HEK293 (cell line): ENCODE measurements at regions of chr16 and their contacts with region 1.

Region 1: DNA sequence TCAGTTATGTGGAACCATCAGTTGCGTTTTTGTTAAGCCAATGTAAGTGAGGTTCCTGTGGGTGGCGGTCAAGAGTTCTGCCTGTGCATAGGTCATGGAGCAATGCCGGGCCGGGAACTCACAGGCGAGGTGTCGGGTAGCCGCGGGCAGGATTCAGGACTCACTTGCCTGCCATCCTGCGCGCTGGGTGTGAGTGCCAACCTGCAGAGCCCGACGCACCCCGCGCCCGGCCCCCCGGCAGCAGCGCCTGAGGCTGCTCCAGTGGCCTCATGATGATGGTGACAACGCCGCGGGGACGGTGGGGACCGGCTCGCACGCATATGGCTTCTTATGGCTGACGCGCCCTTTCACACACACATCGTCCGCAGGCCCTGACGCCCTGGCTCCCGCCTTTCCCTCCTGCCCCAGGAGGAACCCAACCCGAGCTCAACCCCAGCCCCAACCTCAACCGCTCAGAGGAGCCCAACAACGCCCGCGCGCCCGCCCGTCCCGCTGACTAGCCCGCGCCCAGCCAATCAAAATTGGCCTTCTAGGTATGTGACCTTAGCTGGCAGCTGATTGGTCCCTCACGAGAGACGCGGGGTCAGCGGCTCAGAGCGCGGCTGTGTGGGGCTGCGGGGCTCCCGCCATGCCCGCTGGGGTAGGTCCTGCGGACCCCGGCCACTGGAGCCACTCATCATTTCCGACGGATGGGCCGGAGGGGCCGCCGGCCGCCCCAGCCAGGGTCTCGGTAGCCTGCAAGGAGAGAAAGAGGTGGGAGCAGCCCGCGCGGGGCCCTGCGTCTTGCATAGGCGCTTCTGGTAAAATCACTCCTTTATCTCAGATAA is at the start of gene C16orf95:
- H3K4me3 ChIP-seq: peak within 1 kb of the TSS; percentile 87
- H3K27ac ChIP-seq: peak within 1 kb of the TSS; percentile 75
- H3K4me1 ChIP-seq: no peaks in the 10 kb centered on the region; the same call in 1 of the 2 replicates
- CTCF ChIP-seq: peak; percentile 87

Region 2: GRCh38 chr16:87387942-87388817 is 71.0 kb after region 1 on chr16:
- CTCF ChIA-PET with region 1: no interaction called
- POLR2A ChIA-PET with region 1: interaction called, 23 read pairs
- H3K4me3 ChIP-seq: no peak overlapping the region
- H3K27ac ChIP-seq: peak overlapping the region; percentile 27
- H3K4me1 ChIP-seq: no peaks in the 10 kb centered on the region
- CTCF ChIP-seq: no peak